ENCODE measurements at regions of chr14 and their contacts with region 1.

Region 1: DNA sequence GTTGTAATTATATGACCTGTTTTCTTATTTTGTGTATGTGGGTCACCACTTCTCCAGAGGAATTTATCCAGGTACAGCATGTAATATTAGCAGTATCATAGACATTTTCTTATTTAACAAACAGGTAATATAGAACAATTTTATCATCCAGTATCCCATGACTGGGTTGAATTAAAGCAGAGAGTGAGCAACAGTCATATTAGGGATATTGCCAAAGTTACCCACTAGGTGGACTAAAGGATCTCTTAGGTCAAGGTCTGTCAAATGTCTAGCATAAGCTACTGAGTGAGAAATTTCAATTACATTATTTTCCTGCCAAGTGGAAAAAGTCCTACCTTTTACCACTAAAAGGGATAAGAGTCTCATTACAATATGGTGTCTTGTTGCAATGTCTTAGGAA is 62.1 kb upstream of the TRIM9 start:
- DNase-seq: peak; percentile 25
- H3K4me3 ChIP-seq: no peak overlapping the region
- H3K27ac ChIP-seq: no peak overlapping the region
- H3K4me1 ChIP-seq: no peaks in the 10 kb centered on the region
- H3K27me3 ChIP-seq: no peaks in the 10 kb centered on the region
- CTCF ChIP-seq: peak; percentile 69
- EP300 ChIP-seq: no peak
- RAD21 ChIP-seq: peak; percentile 82

Region 2: DNA sequence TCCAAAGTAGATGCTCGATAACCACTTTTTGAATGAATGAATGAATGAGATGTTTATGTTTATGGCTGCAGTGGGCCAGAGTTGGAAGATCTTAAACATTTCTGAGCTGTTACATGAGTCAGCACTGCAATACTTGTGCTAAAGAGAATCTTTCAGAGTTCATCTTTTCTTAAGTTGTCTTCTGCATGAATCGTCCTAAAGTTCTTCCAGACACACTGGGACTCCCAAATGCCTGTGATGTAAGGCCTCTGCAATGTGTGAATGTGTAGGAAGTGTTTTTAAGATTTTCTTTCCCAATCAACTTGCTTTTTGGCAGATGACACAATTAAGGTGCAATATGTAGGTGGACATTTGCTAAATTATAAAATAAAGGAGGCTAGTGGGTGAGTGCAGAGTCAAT is 11.8 kb before region 1 on chr14:
- CTCF ChIA-PET with region 1: no interaction called
- POLR2A ChIA-PET with region 1: no interaction called
- DNase-seq: no peak
- H3K4me3 ChIP-seq: no peak overlapping the region
- H3K27ac ChIP-seq: no peak overlapping the region
- H3K4me1 ChIP-seq: no peaks in the 10 kb centered on the region
- H3K27me3 ChIP-seq: no peaks in the 10 kb centered on the region
- CTCF ChIP-seq: no peak
- EP300 ChIP-seq: no peak
- RAD21 ChIP-seq: no peak

Region 3: GRCh38 chr14:51167587-51168214 is 10.7 kb after region 1 on chr14:
- CTCF ChIA-PET with region 1: interaction called, 10 read pairs
- POLR2A ChIA-PET with region 1: no interaction called
- DNase-seq: no peak
- H3K4me3 ChIP-seq: no peak overlapping the region
- H3K27ac ChIP-seq: peak overlapping the region in 1 of 2 experiments; percentile 27; a peak in 1 of 4 replicates
- H3K4me1 ChIP-seq: peaks cover 0 to 13% of the 10 kb centered on the region in 2 experiments; a peak in 2 of 4 replicates
- H3K27me3 ChIP-seq: no peaks in the 10 kb centered on the region
- CTCF ChIP-seq: no peak
- EP300 ChIP-seq: no peak
- RAD21 ChIP-seq: no peak

Region 4: GRCh38 chr14:51328064-51328771 is 171.2 kb after region 1 on chr14:
- CTCF ChIA-PET with region 1: no interaction called
- POLR2A ChIA-PET with region 1: no interaction called
- DNase-seq: no peak
- H3K4me3 ChIP-seq: no peak overlapping the region
- H3K27ac ChIP-seq: peak overlapping the region in 1 of 2 experiments; percentile 39; a peak in 1 of 4 replicates
- H3K4me1 ChIP-seq: peaks cover 9 to 14% of the 10 kb centered on the region in 2 experiments; a peak in 3 of 4 replicates
- H3K27me3 ChIP-seq: no peaks in the 10 kb centered on the region
- CTCF ChIP-seq: no peak
- EP300 ChIP-seq: no peak
- RAD21 ChIP-seq: no peak

Measured in SK-N-SH (cell line).